Esophagus muscularis mucosa (tissue), 4 donors: ENCODE measurements at regions of chr1 and their contacts with region 1.

Region 1: GRCh38 chr1:88683541-88684481 is at the start of gene PKN2:
- DNase-seq: peak; percentile 99
- H3K4me3 ChIP-seq: peak within 1 kb of the TSS; percentile 94 to 98 (median 98)
- H3K27ac ChIP-seq: peak within 1 kb of the TSS; percentile 94 to 98 (median 96)
- H3K4me1 ChIP-seq: peaks cover 32 to 44% (median 38%) of the 10 kb centered on the region in 4 donors
- H3K27me3 ChIP-seq: no peaks in the 10 kb centered on the region
- CTCF ChIP-seq: peak; percentile 27 to 40 (median 34)
- EP300 ChIP-seq: no peak
- POLR2A ChIP-seq: peak; percentile 59
- total RNA-seq, gene PKN2: 27.2 to 39.9 (median 34.3) TPM

Region 2: DNA sequence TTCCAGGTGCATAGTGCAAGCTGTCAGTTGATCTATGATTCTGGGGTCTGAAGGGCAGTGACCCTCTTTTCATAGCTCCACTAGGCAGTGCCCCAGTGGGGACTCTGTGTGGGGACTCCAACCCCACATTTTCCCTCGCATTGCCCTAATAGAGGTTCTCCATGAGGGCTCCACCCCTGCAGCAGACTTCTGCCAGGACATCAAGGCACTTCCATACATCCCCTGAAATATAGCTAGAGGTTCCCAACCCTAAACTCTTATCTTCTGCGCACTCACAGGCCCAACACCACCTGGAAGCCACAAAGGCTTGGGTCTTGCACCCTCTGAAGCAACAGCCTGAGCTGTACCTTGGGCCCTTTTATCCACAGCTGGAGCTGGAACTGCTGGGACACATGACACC is 65.5 kb before region 1 on chr1:
- intact Hi-C with region 1: no loop called
- DNase-seq: no peak
- H3K4me3 ChIP-seq: no peak overlapping the region
- H3K27ac ChIP-seq: no peak overlapping the region
- H3K4me1 ChIP-seq: no peaks in the 10 kb centered on the region
- H3K27me3 ChIP-seq: no peaks in the 10 kb centered on the region
- CTCF ChIP-seq: no peak
- EP300 ChIP-seq: no peak
- POLR2A ChIP-seq: no peak

Region 3: DNA sequence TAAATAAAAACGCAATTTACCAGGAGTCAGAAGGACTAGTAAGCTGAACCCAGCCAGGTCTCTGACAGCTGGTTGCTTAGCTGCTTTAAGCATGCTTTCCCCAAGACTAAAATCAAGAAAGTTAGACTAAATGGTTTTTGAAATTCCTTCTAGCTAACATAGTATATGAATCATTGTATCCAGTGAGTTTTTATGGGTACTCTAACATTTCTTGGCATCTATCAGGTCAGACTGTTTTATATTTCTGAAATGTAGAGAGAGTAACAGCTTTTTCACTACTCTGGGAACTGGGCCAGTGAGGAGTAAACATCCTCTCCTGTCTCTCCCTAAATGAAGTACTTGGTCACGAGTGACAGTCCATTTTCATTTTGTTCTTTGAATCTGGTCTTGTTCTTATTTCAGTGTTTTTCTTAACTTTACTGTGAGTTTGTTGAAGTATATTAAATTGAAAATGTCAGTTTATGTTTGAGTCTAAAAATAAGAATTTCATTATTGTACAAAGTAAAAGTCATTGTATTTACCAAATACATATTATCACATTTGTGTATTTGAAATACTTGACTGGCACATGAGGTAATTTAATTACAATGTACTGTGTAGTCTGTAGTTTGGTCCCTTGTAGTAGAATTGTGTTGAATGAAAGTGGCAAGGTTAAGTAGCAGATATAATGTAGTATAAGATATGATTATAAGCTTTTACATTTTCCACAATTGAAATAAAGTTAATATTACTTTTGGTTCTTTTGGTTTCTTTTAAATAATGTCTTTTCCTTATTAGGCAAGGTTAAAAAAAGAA is 47.9 kb after region 1 on chr1:
- intact Hi-C with region 1: loop called (anchors 2 kb)
- DNase-seq: no peak
- H3K4me3 ChIP-seq: peak overlapping the region in 3 of 4 donors; percentile 2 to 26 (median 3)
- H3K27ac ChIP-seq: peak overlapping the region; percentile 42 to 76 (median 70)
- H3K4me1 ChIP-seq: peaks cover 11 to 46% (median 39%) of the 10 kb centered on the region in 4 donors
- H3K27me3 ChIP-seq: no peaks in the 10 kb centered on the region
- CTCF ChIP-seq: no peak
- EP300 ChIP-seq: no peak
- POLR2A ChIP-seq: no peak

Region 4: GRCh38 chr1:88888750-88889149 is 204.9 kb after region 1 on chr1:
- intact Hi-C with region 1: loop called (anchors 10 kb)
- DNase-seq: no peak
- H3K4me3 ChIP-seq: no peak overlapping the region
- H3K27ac ChIP-seq: no peak overlapping the region
- H3K4me1 ChIP-seq: peaks cover 28 to 38% (median 35%) of the 10 kb centered on the region in 4 donors
- H3K27me3 ChIP-seq: no peaks in the 10 kb centered on the region
- CTCF ChIP-seq: no peak
- EP300 ChIP-seq: no peak
- POLR2A ChIP-seq: no peak